GM12878 (cell line): ENCODE measurements at regions of chr19 and their contacts with region 1.

Region 1: DNA sequence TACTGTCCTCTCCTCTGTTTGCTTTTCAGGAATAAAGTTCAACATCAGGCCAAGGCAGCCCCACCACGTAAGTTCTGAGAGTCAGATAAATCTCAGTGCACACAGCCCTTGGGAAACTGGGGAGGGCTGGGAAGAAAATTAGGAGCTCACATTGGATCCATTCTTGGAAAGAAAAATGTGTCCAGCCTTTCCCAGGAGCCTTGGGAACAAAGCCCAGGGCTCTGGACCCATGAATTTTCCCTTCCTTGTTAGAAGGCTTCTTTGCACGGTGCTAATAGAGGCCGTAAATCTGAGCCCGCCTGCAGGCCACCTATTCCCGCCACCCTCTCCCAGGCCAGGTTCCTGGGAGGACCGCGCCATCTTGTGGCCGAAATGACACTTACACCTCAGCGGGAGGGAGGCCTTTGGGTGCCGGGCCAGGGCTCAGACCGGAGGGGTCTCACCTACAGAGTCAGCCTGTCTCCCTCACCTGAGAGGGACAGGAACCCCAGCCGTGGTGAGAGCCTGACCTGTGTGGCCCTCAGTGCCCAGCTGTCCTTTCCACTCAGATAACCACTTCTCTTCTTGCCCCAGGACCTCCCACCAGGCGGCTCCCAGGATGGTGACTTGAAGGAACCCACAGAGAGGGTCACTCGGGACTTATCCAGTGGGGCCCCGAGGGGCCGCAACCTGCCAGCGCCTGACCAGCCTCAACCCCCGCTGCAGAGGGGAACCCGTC is 25.1 kb upstream of the KCTD15 start:
- DNase-seq: no peak
- ATAC-seq: peak; percentile 95
- H3K4me3 ChIP-seq: no peak overlapping the region
- H3K27ac ChIP-seq: no peak overlapping the region
- H3K4me1 ChIP-seq: no peaks in the 10 kb centered on the region
- H3K27me3 ChIP-seq: no peaks in the 10 kb centered on the region; a peak in 1 of 4 replicates
- CTCF ChIP-seq: peak; percentile 70 to 92 (median 77)
- EP300 ChIP-seq: no peak
- POLR2A ChIP-seq: no peak
- RAD21 ChIP-seq: peak; percentile 90

Region 2: GRCh38 chr19:33416307-33417215 is 355.0 kb before region 1 on chr19:
- CTCF ChIA-PET with region 1: interaction called, 12 read pairs
- POLR2A ChIA-PET with region 1: no interaction called
- RAD21 ChIA-PET with region 1: no interaction called
- SMC1A ChIA-PET with region 1: no interaction called
- in situ Hi-C with region 1: loop called (anchors 5 kb)
- intact Hi-C with region 1: no loop called
- DNase-seq: no peak
- ATAC-seq: peak; percentile 86
- H3K4me3 ChIP-seq: no peak overlapping the region
- H3K27ac ChIP-seq: no peak overlapping the region
- H3K4me1 ChIP-seq: no peaks in the 10 kb centered on the region
- H3K27me3 ChIP-seq: no peaks in the 10 kb centered on the region
- CTCF ChIP-seq: peak; percentile 62 to 76 (median 66)
- EP300 ChIP-seq: no peak
- POLR2A ChIP-seq: no peak
- RAD21 ChIP-seq: peak; percentile 29; the same call in 1 of the 2 replicates

Region 3: GRCh38 chr19:33430674-33431277 is 340.8 kb before region 1 on chr19:
- CTCF ChIA-PET with region 1: interaction called, 40 read pairs
- POLR2A ChIA-PET with region 1: no interaction called
- RAD21 ChIA-PET with region 1: interaction called, 18 read pairs
- SMC1A ChIA-PET with region 1: interaction called, 7 read pairs
- in situ Hi-C with region 1: no loop called
- intact Hi-C with region 1: loop called (anchors 1 kb)
- DNase-seq: no peak
- ATAC-seq: peak; percentile 95
- H3K4me3 ChIP-seq: no peak overlapping the region
- H3K27ac ChIP-seq: no peak overlapping the region
- H3K4me1 ChIP-seq: no peaks in the 10 kb centered on the region
- H3K27me3 ChIP-seq: no peaks in the 10 kb centered on the region
- CTCF ChIP-seq: peak; percentile 82 to 90 (median 83)
- EP300 ChIP-seq: no peak
- POLR2A ChIP-seq: no peak
- RAD21 ChIP-seq: peak; percentile 65

Region 4: GRCh38 chr19:33720691-33721682 is 50.6 kb before region 1 on chr19:
- CTCF ChIA-PET with region 1: no interaction called
- POLR2A ChIA-PET with region 1: no interaction called
- RAD21 ChIA-PET with region 1: no interaction called
- SMC1A ChIA-PET with region 1: no interaction called
- in situ Hi-C with region 1: no loop called
- intact Hi-C with region 1: no loop called
- DNase-seq: no peak
- ATAC-seq: no peak
- H3K4me3 ChIP-seq: no peak overlapping the region
- H3K27ac ChIP-seq: no peak overlapping the region
- H3K4me1 ChIP-seq: no peaks in the 10 kb centered on the region
- H3K27me3 ChIP-seq: no peaks in the 10 kb centered on the region
- CTCF ChIP-seq: no peak
- EP300 ChIP-seq: no peak
- POLR2A ChIP-seq: no peak
- RAD21 ChIP-seq: no peak

Region 5: DNA sequence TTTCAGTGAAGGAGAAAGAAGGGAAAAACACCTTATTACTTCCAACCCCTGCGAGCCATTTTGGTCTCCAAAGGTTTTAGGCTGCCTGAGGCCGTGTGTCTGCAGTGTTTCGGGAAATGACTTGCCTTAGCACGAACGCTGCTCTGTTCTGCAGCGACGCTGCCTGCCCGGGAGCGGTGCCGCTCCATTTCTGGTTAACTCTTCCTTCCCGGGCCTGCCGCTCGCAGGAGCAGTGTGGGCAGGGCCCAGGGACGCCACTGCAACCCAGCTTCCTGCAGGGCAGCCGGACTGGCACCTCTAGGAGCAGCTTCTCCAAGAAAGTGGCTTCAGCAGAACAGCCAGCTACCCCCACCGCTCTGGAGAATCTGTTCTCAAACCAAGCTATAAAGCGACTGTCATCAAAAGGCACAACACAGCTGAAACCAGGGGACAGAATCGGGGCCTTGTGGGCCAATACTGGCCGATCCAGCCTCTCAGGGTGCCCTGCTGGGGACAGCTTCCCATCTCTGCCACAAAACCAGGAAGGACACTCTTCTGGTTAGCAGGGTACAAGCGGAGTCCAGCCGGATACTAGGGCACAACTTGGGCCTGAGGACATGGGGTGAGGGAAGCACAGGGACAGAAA is 97.4 kb after region 1 on chr19:
- CTCF ChIA-PET with region 1: no interaction called
- POLR2A ChIA-PET with region 1: no interaction called
- RAD21 ChIA-PET with region 1: no interaction called
- SMC1A ChIA-PET with region 1: no interaction called
- in situ Hi-C with region 1: no loop called
- intact Hi-C with region 1: no loop called
- DNase-seq: no peak
- ATAC-seq: no peak
- H3K4me3 ChIP-seq: no peak overlapping the region
- H3K27ac ChIP-seq: no peak overlapping the region
- H3K4me1 ChIP-seq: no peaks in the 10 kb centered on the region
- H3K27me3 ChIP-seq: no peaks in the 10 kb centered on the region; a peak in 1 of 4 replicates
- CTCF ChIP-seq: no peak
- EP300 ChIP-seq: no peak
- POLR2A ChIP-seq: no peak
- RAD21 ChIP-seq: no peak